Cardiac septum (tissue), 1 donor: ENCODE measurements at regions of chr4 and their contacts with region 1.

Region 1: GRCh38 chr4:77385124-77385969 is 220.3 kb upstream of the CXCL13 start:
- DNase-seq: no peak

Region 2: GRCh38 chr4:77347341-77347966 is 37.9 kb before region 1 on chr4:
- intact Hi-C with region 1: no loop called
- DNase-seq: no peak

Region 3: GRCh38 chr4:77433418-77433733 is 48.0 kb after region 1 on chr4:
- intact Hi-C with region 1: loop called (anchors 2 kb)
- DNase-seq: no peak

Region 4: DNA sequence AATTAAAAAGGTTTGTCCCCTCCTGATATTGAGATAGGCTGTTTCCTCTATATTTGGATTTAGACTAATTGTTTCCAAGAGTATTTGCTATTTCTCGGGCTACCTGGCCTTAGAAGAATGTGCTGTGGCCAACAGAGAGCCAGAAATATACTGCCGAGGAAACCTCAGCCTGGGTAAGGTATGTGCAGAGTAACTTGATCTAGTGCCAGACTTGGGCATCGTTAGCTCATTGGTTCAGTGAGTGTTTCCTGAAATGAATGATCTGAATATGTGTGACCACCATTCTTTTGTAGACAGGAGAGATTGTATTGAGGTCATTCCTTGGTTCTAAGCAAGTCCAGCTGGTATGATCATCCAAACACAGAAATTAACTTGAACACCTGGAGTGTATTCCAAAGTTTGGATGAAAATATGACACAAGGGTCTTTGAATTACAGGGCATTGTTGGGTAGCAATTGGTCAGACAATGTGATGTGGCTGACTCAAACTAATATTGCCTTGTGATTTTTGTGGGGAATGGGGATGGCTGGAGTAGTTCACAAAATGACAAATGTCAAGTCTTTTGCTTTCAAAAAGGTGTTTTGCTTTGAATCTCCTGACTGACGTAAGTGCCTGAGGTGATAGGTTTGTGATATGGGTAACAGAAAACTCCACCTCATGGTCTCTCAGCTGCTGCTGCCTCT is 120.1 kb after region 1 on chr4:
- intact Hi-C with region 1: no loop called
- DNase-seq: no peak

Region 5: GRCh38 chr4:77599378-77599777 is 214.0 kb after region 1 on chr4:
- intact Hi-C with region 1: loop called (anchors 5 kb)
- DNase-seq: no peak

Region 6: GRCh38 chr4:77618383-77619122 is 233.2 kb after region 1 on chr4:
- intact Hi-C with region 1: loop called (anchors 5 kb)
- DNase-seq: no peak

Region 7: DNA sequence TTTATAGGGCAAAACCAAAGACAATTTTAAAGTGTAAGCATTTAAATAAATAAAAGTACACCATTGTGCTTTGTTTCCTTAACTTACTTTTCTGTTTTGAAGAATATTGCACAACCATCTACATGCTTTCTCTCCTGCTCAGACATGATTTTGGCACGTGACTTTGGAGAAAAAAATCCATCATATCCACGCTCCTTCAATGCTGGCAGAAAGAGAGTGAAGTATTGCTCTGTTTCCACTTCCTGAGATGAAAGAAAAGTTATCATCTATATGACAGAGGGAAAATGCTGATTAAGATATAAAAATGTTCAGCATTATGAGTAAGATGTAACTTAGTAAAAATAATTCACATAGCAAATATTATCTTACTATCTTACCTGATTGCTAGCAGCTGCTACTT is 356.7 kb after region 1 on chr4:
- intact Hi-C with region 1: no loop called
- DNase-seq: no peak